Cardiac septum (tissue), 1 donor: ENCODE measurements at regions of chr18 and their contacts with region 1.

Region 1: DNA sequence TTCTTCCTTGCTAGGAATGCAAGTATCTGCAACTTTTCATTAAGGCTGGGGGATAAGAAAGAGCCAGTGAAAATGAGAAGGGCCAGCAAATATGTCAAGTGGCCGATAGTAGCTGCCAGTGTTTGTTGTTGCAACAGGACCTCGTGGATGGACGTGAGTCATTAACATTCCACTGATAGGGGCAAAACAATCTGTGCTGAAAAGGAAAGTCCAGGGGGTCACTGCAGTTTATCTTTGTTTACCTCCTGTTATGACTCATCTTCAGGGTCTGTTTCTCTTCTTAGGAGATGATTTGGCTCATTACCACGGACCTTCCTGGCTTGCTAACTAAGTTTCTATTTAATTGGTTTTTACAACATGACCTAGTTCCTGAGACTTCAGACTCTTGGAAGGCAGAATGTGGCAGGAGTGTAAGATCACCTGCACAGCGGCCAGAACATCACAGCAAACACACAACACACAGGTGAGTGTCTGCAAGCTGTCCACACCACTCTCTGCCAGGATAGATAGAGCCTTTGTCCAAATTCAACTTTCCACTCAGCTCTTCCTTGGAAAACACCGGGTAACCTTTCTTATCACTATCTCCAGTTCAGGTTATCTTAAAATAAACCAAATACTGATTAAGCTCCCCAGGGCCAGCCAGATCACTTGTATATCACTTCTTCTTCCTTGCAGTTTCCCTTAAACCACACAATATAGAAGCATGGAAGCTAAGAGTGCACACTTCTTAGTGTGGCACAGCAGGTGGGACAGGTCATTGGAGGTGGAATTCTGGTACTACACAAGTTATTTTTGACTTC is 157.5 kb upstream of the LMAN1 start:
- DNase-seq: no peak

Region 2: DNA sequence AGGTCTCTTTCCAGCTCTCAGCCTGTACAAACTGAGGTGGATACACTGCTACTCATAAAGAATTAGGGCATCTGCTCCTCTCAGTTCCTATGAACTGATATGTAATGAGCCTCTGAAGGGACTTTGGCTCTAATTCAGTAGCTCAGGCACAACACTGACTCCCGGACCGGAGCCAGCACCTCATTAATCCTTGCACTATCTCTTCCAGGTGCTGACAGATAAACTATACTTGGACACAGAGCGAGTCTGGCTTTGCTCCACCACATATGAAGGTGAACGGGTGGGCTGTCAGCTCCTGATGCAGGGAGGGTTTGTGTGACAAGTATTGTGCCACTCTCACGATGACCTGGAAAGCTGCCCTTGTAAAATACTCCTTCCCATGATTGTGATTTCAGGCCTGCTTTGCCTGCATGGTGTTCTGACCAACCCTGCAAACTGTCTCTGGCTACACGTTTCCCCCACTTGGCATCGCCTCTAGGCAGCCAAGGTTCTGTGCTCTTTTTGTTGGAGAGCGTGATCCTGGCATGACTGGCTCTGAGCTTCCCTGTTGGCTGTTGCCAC is 45.9 kb before region 1 on chr18:
- intact Hi-C with region 1: loop called (anchors 2 kb)
- DNase-seq: no peak